ENCODE measurements at regions of chr15 and their contacts with region 1.

Region 1: GRCh38 chr15:92989470-92989869 is 89.3 kb downstream of the CHD2 start:
- DNase-seq: no peak
- H3K4me3 ChIP-seq: no peak overlapping the region
- H3K27ac ChIP-seq: no peak overlapping the region
- H3K4me1 ChIP-seq: no peaks in the 10 kb centered on the region
- H3K27me3 ChIP-seq: no peaks in the 10 kb centered on the region
- CTCF ChIP-seq: no peak
- POLR2A ChIP-seq: no peak

Region 2: DNA sequence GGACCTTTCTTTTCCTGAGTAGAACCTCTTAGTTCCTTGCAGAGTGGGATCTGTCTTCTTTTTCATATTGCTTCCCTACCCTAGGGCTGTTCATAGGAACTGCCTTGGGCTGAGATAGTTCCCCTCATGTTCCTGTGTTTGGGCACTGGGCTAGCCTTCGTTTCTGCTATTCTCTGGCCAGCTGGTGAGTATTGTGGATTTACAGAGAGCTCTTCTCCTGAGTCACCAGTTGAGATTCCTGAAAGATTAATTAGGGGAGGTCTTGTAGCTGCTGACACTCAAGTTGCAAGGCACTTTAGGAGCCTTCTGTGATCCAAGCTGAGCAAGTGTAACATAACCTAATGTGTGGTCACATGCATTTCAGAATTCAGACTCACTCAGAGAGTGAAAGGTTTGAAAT is 58.7 kb before region 1 on chr15:
- intact Hi-C with region 1: loop called (anchors 10 kb)
- DNase-seq: no peak
- H3K4me3 ChIP-seq: no peak overlapping the region
- H3K27ac ChIP-seq: peak overlapping the region in 3 of 4 donors; percentile 5 to 26 (median 7)
- H3K4me1 ChIP-seq: peaks cover 0 to 27% (median 0%) of the 10 kb centered on the region in 3 donors
- H3K27me3 ChIP-seq: no peaks in the 10 kb centered on the region
- CTCF ChIP-seq: no peak
- POLR2A ChIP-seq: no peak